ENCODE measurements at regions of chr1 and their contacts with region 1.

Region 1: DNA sequence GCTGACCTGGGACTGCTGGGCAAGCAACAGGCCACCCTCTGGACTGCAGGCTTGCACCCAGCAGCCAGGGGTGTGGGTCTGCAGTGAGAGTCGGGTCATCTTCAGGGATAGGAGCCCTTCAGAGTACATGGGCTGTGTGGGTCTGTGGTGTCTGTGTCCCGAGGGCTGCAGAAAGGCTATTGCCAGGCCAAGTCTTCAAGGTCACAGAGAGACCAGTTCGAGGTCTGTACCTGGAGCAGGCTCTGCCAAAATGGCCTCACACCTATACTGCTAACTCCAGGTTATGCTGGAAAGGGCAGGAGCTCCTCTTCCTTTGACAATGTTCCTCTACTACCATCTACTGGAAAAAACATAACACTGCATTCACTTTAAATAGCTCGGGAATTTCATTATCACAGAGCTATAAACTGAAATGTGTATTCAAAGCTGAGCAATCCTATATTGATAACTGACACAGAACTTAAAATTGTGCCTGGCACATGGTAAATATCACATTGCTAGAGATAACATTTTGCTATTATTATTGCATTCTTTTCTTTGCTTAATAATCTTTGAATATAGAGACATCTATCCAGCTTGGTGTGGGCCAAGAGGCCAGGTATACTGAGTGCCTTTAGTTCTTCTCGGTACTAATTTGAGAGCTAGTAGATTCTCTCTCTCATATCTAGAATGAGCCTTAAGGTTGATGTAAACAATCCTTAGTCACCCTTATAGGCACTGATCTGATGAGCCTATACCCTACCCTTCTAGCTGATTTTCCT is 6.9 kb upstream of the DNAH14 start:
- DNase-seq: peak; percentile 53 to 55
- H3K4me3 ChIP-seq: no peak overlapping the region
- H3K4me3 Mint-ChIP-seq: no peak overlapping the region
- H3K27ac Mint-ChIP-seq: no peak overlapping the region
- H3K4me1 ChIP-seq: peaks cover 6% of the 10 kb centered on the region; the same call in 1 of the 2 replicates
- H3K4me1 Mint-ChIP-seq: peaks cover 13% of the 10 kb centered on the region
- H3K27me3 ChIP-seq: no peaks in the 10 kb centered on the region
- H3K27me3 Mint-ChIP-seq: no peaks in the 10 kb centered on the region
- CTCF ChIP-seq: peak; percentile 67 to 69

Region 2: GRCh38 chr1:224513787-224514209 is 408.8 kb before region 1 on chr1:
- CTCF ChIA-PET with region 1: interaction called, 41 read pairs
- POLR2A ChIA-PET with region 1: no interaction called
- intact Hi-C with region 1: loop called (anchors 1 kb)
- DNase-seq: peak; percentile 85 to 90
- H3K4me3 ChIP-seq: no peak overlapping the region
- H3K4me3 Mint-ChIP-seq: no peak overlapping the region
- H3K27ac Mint-ChIP-seq: no peak overlapping the region
- H3K4me1 ChIP-seq: peaks cover 8% of the 10 kb centered on the region; the same call in 1 of the 2 replicates
- H3K4me1 Mint-ChIP-seq: no peaks in the 10 kb centered on the region
- H3K27me3 ChIP-seq: no peaks in the 10 kb centered on the region
- H3K27me3 Mint-ChIP-seq: no peaks in the 10 kb centered on the region
- CTCF ChIP-seq: peak; percentile 95 to 99

Region 3: GRCh38 chr1:224700915-224701531 is 221.6 kb before region 1 on chr1:
- CTCF ChIA-PET with region 1: interaction called, 20 read pairs
- POLR2A ChIA-PET with region 1: no interaction called
- intact Hi-C with region 1: no loop called
- DNase-seq: peak in 1 of 2 experiments; percentile 8
- H3K4me3 ChIP-seq: no peak overlapping the region
- H3K4me3 Mint-ChIP-seq: no peak overlapping the region
- H3K27ac Mint-ChIP-seq: no peak overlapping the region
- H3K4me1 ChIP-seq: no peaks in the 10 kb centered on the region
- H3K4me1 Mint-ChIP-seq: no peaks in the 10 kb centered on the region
- H3K27me3 ChIP-seq: no peaks in the 10 kb centered on the region
- H3K27me3 Mint-ChIP-seq: peaks cover 3% of the 10 kb centered on the region
- CTCF ChIP-seq: peak in 1 of 2 experiments; percentile 26

Region 4: GRCh38 chr1:224873434-224874369 is 48.9 kb before region 1 on chr1:
- CTCF ChIA-PET with region 1: interaction called, 14 read pairs
- POLR2A ChIA-PET with region 1: no interaction called
- intact Hi-C with region 1: no loop called
- DNase-seq: no peak
- H3K4me3 ChIP-seq: no peak overlapping the region
- H3K4me3 Mint-ChIP-seq: no peak overlapping the region
- H3K27ac Mint-ChIP-seq: no peak overlapping the region
- H3K4me1 ChIP-seq: peaks cover 37% of the 10 kb centered on the region
- H3K4me1 Mint-ChIP-seq: no peaks in the 10 kb centered on the region
- H3K27me3 ChIP-seq: no peaks in the 10 kb centered on the region
- H3K27me3 Mint-ChIP-seq: no peaks in the 10 kb centered on the region
- CTCF ChIP-seq: no peak

Region 5: DNA sequence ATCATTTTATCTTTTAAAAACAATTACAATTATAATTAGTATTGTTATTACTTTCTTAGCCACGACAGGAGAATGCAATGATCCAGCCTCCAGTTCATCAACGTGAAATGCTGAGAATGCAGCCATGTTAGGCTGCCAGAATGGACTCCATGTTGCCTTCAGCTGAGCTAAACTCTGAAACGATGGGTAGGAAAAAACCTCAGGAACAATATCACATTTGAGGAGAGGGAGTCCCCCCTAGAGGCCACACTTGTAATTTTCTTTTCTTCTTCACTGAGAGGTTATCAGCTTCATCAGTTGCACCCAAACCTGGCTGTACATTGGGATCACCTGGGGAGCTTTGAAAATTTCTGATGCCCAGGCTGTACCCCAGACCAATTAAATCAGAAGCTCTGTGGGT is 27.7 kb before region 1 on chr1:
- CTCF ChIA-PET with region 1: interaction called, 23 read pairs
- POLR2A ChIA-PET with region 1: no interaction called
- intact Hi-C with region 1: no loop called
- DNase-seq: peak in 1 of 2 experiments; percentile 47
- H3K4me3 ChIP-seq: no peak overlapping the region
- H3K4me3 Mint-ChIP-seq: no peak overlapping the region
- H3K27ac Mint-ChIP-seq: no peak overlapping the region
- H3K4me1 ChIP-seq: no peaks in the 10 kb centered on the region
- H3K4me1 Mint-ChIP-seq: no peaks in the 10 kb centered on the region
- H3K27me3 ChIP-seq: no peaks in the 10 kb centered on the region
- H3K27me3 Mint-ChIP-seq: no peaks in the 10 kb centered on the region
- CTCF ChIP-seq: peak; percentile 44 to 47

Region 6: DNA sequence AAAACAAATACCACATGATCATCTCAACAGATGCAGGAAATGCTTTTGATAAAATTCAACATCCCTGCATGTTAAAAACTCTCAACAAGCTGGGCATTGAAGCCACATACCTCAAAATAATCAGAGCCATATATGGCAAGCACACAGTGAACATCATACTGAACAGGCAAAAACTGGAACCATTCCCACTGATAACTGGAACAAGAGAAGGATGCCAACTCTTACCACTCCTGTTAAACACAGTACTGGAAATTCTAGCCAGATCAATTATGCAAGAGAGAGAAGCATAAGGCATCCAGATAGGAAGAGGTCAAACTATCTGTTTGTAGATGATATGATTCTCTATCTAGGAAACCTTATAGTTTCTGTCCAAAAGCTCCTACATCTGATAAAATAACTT is 98.5 kb after region 1 on chr1:
- CTCF ChIA-PET with region 1: no interaction called
- POLR2A ChIA-PET with region 1: no interaction called
- intact Hi-C with region 1: no loop called
- DNase-seq: no peak
- H3K4me3 ChIP-seq: no peak overlapping the region
- H3K4me3 Mint-ChIP-seq: no peak overlapping the region
- H3K27ac Mint-ChIP-seq: no peak overlapping the region
- H3K4me1 ChIP-seq: no peaks in the 10 kb centered on the region
- H3K4me1 Mint-ChIP-seq: no peaks in the 10 kb centered on the region
- H3K27me3 ChIP-seq: no peaks in the 10 kb centered on the region
- H3K27me3 Mint-ChIP-seq: no peaks in the 10 kb centered on the region
- CTCF ChIP-seq: no peak

Measured in Caco-2 (cell line).